Aorta (tissue), 5 donors: ENCODE measurements at regions of chr14 and their contacts with region 1.

Region 1: GRCh38 chr14:44912041-44912869 is 49.5 kb downstream of the KLHL28 start:
- DNase-seq: peak in 1 of 2 donors; percentile 74
- ATAC-seq: peak; percentile 69
- H3K4me3 ChIP-seq: peak overlapping the region; percentile 28 to 32
- H3K27ac ChIP-seq: no peak overlapping the region
- H3K4me1 ChIP-seq: no peaks in the 10 kb centered on the region
- H3K27me3 ChIP-seq: no peaks in the 10 kb centered on the region

Region 2: GRCh38 chr14:44961604-44962333 is 49.5 kb after region 1 on chr14 and contains the starts of genes KLHL28 and TOGARAM1:
- intact Hi-C with region 1: loop called in 1 of 2 experiments (anchors 5 kb)
- DNase-seq: peak; percentile 97 to 98
- ATAC-seq: peak; percentile 99
- H3K4me3 ChIP-seq: peak within 1 kb of the TSS; percentile 83 to 87
- H3K27ac ChIP-seq: peak within 1 kb of the TSS in 1 of 2 donors; percentile 88
- H3K4me1 ChIP-seq: peaks cover 5 to 6% of the 10 kb centered on the region in 2 donors
- H3K27me3 ChIP-seq: no peaks in the 10 kb centered on the region
- total RNA-seq, gene KLHL28: 17.3 to 18.8 TPM
- total RNA-seq, gene TOGARAM1: 12.4 to 21.4 TPM

Region 3: DNA sequence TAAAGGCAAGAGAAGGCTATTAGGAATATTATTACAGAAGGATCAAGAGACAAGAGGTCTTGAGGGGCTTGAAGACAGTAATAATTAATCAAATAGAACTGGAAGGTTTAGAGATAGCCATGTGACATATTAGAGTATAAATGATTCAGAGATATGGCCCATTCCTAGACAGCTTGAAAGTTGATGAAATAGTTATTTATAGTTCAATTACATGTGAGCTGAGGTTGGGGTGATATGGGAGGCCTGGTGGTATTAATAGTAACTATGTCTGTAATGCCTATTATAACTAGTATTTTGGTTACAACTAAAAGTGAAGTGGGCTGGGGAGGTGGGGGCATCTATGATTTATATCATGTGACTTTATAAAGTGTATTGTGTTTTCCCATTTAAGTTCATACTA is 354.8 kb after region 1 on chr14:
- intact Hi-C with region 1: loop called in 1 of 2 experiments (anchors 2 kb)
- DNase-seq: no peak
- ATAC-seq: no peak
- H3K4me3 ChIP-seq: no peak overlapping the region
- H3K27ac ChIP-seq: no peak overlapping the region
- H3K4me1 ChIP-seq: peaks cover 0 to 2% of the 10 kb centered on the region in 2 donors
- H3K27me3 ChIP-seq: no peaks in the 10 kb centered on the region